ENCODE measurements at regions of chr14 and their contacts with region 1.

Region 1: GRCh38 chr14:68780358-68781160 is 12.3 kb downstream of the ZFP36L1 start:
- DNase-seq: peak; percentile 80
- ATAC-seq: peak; percentile 66
- H3K4me3 Mint-ChIP-seq: peak overlapping the region; percentile 63
- H3K27ac Mint-ChIP-seq: peak overlapping the region; percentile 98
- H3K4me1 Mint-ChIP-seq: peaks cover 59% of the 10 kb centered on the region
- H3K27me3 Mint-ChIP-seq: no peaks in the 10 kb centered on the region

Region 2: DNA sequence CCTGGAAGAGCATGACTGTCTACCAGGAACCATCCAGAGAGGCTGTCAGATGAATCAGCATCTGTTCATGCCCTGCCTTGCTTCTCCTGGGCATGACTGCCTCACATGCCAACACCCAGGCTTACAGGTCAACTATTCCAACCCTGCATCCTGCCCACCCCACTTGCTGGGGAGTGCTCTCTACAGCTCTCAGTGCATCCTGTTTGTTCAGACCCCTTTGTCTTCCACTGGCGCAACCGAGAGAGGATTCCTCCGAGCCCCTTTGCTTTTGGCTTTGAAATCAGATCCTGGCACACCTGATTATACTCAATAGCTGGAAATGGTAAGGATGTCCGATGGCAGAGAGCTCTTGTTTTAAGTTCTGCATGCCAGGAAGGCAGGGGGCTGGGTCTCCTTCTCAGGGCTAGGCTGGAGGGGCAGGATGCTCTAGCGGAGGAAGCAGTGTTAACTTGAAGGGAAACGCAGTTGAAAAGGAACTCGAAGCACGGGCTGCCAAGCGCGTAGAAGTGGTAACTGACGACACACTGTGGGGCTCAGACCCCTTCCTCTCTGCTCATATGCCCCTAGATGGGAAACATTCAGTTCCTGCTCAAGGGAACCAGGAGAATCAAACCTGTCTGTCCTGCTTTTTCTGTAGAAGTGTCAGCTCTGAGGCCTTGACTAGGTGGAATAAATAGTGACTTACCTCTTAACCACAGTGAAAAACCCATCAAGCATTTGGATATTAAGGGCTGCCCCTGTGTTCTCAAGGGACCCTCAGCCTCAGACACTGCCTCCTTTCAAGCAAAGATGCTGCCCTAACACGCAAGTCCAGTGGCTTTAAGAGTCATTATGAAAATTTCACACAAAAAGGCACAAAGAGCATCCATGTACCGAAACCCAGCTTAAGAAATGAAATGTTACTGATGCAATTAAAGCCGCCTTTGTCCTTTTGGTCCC is 285.2 kb before region 1 on chr14:
- CTCF ChIA-PET with region 1: no interaction called
- DNase-seq: no peak
- ATAC-seq: no peak
- H3K4me3 Mint-ChIP-seq: no peak overlapping the region
- H3K27ac Mint-ChIP-seq: no peak overlapping the region
- H3K4me1 Mint-ChIP-seq: no peaks in the 10 kb centered on the region
- H3K27me3 Mint-ChIP-seq: no peaks in the 10 kb centered on the region

Region 3: GRCh38 chr14:68663385-68664076 is 117.0 kb before region 1 on chr14:
- CTCF ChIA-PET with region 1: interaction called, 14 read pairs
- DNase-seq: peak; percentile 76
- ATAC-seq: peak; percentile 93
- H3K4me3 Mint-ChIP-seq: peak overlapping the region; percentile 70
- H3K27ac Mint-ChIP-seq: peak overlapping the region; percentile 76
- H3K4me1 Mint-ChIP-seq: peaks cover 30% of the 10 kb centered on the region
- H3K27me3 Mint-ChIP-seq: no peaks in the 10 kb centered on the region

Region 4: GRCh38 chr14:68695326-68695768 is 85.2 kb before region 1 on chr14:
- CTCF ChIA-PET with region 1: no interaction called
- DNase-seq: peak; percentile 67
- ATAC-seq: peak; percentile 86
- H3K4me3 Mint-ChIP-seq: no peak overlapping the region
- H3K27ac Mint-ChIP-seq: peak overlapping the region; percentile 51
- H3K4me1 Mint-ChIP-seq: peaks cover 18% of the 10 kb centered on the region
- H3K27me3 Mint-ChIP-seq: peaks cover 12% of the 10 kb centered on the region

Region 5: GRCh38 chr14:68718023-68718995 is 62.2 kb before region 1 on chr14:
- CTCF ChIA-PET with region 1: interaction called, 17 read pairs
- DNase-seq: no peak
- ATAC-seq: no peak
- H3K4me3 Mint-ChIP-seq: no peak overlapping the region
- H3K27ac Mint-ChIP-seq: no peak overlapping the region
- H3K4me1 Mint-ChIP-seq: peaks cover 20% of the 10 kb centered on the region
- H3K27me3 Mint-ChIP-seq: peaks cover 6% of the 10 kb centered on the region

Region 6: GRCh38 chr14:68767231-68767610 is 13.3 kb before region 1 on chr14:
- CTCF ChIA-PET with region 1: no interaction called
- DNase-seq: no peak
- ATAC-seq: no peak
- H3K4me3 Mint-ChIP-seq: no peak overlapping the region
- H3K27ac Mint-ChIP-seq: no peak overlapping the region
- H3K4me1 Mint-ChIP-seq: peaks cover 20% of the 10 kb centered on the region
- H3K27me3 Mint-ChIP-seq: no peaks in the 10 kb centered on the region

Region 7: DNA sequence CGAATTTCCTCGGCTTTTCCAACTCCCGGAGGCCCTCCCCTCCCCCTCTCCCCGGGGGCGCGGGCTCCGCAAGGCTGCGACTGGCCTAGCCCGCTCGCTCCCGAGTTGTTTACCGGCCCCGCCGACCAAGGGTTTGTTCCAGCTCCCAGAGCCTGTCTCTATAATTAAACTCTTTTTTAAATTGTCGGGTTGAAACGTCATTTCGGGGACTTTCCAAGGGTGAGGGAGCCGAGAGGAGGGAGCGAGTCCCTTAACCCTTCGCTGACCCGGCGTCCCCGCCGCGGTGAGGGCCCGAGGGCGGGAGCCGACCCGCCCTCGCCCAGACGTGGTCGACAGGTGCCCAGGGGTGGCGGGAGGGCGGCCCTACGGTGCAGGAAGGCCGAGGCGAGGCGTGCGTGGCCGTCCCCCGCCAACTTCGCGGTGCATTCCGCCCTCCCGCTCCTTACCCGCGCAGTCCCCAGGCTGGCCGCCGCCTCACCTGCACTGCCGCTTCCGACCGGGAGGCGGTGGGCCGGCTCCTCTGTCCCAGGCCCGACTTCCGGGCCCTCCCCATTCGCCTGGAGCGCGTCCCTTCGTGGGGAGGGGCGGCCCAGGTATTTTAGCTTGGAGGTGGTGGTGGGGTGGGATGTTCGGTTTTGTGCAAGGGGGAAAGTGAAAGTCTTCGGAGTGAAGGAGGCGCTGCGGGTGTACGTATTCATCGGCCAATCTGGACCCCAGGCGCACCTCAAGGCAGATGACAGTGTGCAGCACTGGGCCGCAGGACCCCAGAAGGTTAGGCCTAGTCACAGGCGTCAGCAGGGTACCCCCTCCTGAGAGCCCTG is 15.2 kb after region 1 on chr14:
- CTCF ChIA-PET with region 1: interaction called, 79 read pairs
- DNase-seq: peak; percentile 85
- ATAC-seq: peak; percentile 52
- H3K4me3 Mint-ChIP-seq: peak overlapping the region; percentile 87
- H3K27ac Mint-ChIP-seq: peak overlapping the region; percentile 100
- H3K4me1 Mint-ChIP-seq: peaks cover 33% of the 10 kb centered on the region
- H3K27me3 Mint-ChIP-seq: no peaks in the 10 kb centered on the region